Activated CD4-positive, alpha-beta T cell treated with anti-CD3 and anti-CD28 coated beads, Interleukin-2, amount 10 ng/mL, durations not matched to agents 24 days and 14 days (primary cell): ENCODE measurements at regions of chr3 and their contacts with region 1.

Region 1: GRCh38 chr3:18559331-18559842 is 134.2 kb upstream of the SATB1 start:
- DNase-seq: peak; percentile 80
- H3K4me3 Mint-ChIP-seq: peak overlapping the region; percentile 64
- H3K27ac Mint-ChIP-seq: peak overlapping the region; percentile 97
- H3K4me1 Mint-ChIP-seq: peaks cover 65% of the 10 kb centered on the region
- H3K27me3 Mint-ChIP-seq: no peaks in the 10 kb centered on the region

Region 2: DNA sequence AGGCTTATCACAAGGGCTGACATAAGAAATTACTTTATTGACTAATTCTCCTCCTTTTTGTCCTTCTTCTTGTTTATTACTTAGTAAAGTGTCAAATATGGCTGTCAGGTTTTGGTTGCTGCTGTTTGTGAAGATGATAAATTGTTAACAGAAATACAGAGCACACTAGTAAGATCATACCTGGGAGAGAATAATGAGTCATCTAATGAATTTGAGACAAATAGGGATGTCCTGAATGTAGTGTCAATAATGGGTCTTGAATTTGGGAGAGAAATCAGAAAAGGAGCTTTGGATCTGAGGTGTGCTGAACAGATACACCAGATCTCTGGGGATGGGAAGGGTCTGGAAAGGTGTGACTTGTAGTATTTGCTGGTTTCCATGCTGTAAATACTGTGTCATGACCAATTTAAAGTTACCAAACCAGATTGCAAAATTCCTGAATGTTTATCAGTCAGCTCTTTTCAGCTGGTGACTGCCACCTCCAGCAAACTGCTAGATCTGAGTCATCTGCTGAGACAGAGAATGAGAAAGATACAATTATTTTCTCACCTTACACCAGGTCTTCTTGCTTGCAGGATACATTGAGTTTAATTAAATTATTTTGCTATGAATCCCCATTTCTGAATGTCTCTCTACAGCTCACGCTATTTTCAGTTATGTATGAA is 57.6 kb before region 1 on chr3:
- intact Hi-C with region 1: loop called (anchors 2 kb)
- DNase-seq: no peak
- H3K4me3 Mint-ChIP-seq: no peak overlapping the region
- H3K27ac Mint-ChIP-seq: peak overlapping the region; percentile 36
- H3K4me1 Mint-ChIP-seq: peaks cover 31% of the 10 kb centered on the region
- H3K27me3 Mint-ChIP-seq: no peaks in the 10 kb centered on the region

Region 3: DNA sequence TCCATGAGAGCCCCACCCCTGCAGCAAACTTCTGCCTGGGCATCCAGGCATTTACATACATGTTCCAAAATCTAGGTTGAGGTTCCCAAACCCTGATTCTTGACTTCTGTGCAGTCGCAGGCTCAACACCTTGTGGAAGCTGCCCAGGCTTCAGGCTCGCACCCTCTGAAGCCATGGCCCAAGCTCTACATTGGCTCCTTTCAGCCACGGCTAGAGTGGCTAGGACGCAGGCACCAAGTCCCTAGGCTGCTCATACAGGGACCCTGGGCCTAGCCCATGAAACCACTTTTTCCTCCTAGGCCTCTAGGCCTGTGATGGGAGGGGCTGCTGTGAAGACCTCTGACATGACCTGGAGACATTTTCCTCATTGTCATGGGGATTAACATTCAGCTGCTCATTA is 38.5 kb after region 1 on chr3:
- intact Hi-C with region 1: loop called (anchors 5 kb)
- DNase-seq: no peak
- H3K4me3 Mint-ChIP-seq: no peak overlapping the region
- H3K27ac Mint-ChIP-seq: no peak overlapping the region
- H3K4me1 Mint-ChIP-seq: no peaks in the 10 kb centered on the region
- H3K27me3 Mint-ChIP-seq: no peaks in the 10 kb centered on the region

Region 4: GRCh38 chr3:18679238-18679637 is 119.9 kb after region 1 on chr3:
- intact Hi-C with region 1: loop called (anchors 1 kb)
- DNase-seq: peak; percentile 87
- H3K4me3 Mint-ChIP-seq: peak overlapping the region; percentile 62
- H3K27ac Mint-ChIP-seq: peak overlapping the region; percentile 78
- H3K4me1 Mint-ChIP-seq: peaks cover 70% of the 10 kb centered on the region
- H3K27me3 Mint-ChIP-seq: no peaks in the 10 kb centered on the region

Region 5: DNA sequence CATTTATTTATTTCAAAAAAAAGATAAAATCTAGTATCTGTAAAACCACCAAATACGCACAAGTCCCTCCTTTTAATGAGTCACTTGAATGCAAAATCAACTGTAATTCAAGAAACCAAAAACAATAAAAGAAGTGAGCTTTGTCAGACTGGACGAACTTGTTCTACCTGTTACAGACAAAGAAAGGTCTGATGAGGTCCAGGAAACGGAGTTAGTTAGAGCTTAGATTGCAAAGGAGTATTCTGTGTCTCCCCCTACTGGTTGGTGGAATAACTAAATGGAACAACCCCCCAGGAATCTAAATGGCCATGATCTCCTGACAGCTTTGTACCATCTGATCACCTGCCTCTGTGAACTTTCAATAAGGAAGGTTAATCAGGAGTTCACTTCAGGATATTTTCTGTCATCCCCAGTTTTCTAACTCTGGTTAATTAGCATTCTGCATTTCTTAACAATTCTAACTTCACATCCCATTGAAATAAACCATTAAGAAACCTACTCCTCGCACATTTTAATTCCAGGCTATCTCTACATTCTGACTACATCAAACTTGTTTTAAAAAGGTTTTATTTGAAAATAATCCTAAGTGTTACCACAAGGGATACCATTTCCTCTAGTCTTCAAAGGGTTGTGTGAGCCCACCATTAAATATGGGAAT is 198.8 kb after region 1 on chr3:
- intact Hi-C with region 1: loop called (anchors 1 kb)
- DNase-seq: peak; percentile 88
- H3K4me3 Mint-ChIP-seq: peak overlapping the region; percentile 27
- H3K27ac Mint-ChIP-seq: peak overlapping the region; percentile 74
- H3K4me1 Mint-ChIP-seq: peaks cover 38% of the 10 kb centered on the region
- H3K27me3 Mint-ChIP-seq: no peaks in the 10 kb centered on the region